ENCODE measurements at regions of chr2 and their contacts with region 1.

Region 1: DNA sequence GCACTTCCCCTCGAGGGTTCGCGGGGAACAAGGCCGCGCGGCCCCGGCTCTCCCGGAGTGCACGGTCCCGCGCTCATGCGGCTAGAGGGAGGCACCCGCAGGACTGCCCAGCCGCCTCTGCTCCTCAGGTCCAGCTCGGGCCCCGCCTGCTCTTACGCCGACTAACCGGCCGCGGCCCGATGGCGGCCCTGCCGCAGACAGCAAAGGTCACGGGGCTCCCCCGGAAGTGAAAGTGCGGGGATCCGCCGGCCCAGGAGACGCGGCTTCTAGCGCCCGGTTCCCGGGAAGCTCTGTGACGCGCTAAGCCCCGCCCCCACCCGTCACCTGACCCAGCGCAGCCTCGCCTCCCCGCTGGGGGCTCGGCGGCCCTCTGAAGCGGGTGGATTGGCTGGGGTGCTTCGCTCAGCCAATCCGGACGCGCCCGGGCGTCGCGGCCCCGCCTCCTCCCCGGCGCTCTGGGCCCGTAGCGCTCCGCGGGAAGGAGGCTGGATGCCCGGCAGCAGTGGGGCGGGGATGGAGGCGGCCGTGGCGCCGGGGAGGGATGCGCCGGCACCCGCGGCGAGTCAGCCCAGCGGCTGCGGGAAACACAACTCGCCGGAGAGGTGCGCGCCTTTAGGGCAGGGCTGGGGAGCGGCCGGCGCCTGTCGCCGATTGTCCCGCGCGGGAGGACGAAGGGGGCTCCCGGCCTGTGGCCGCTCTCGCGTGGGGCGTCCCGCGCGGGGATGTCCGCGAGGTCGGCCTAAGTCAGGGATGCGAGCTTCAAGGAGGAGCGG is at the start of gene SCLY:
- DNase-seq: peak; percentile 98
- ATAC-seq: peak; percentile 99
- total RNA-seq, gene SCLY: 10.8 TPM

Region 2: DNA sequence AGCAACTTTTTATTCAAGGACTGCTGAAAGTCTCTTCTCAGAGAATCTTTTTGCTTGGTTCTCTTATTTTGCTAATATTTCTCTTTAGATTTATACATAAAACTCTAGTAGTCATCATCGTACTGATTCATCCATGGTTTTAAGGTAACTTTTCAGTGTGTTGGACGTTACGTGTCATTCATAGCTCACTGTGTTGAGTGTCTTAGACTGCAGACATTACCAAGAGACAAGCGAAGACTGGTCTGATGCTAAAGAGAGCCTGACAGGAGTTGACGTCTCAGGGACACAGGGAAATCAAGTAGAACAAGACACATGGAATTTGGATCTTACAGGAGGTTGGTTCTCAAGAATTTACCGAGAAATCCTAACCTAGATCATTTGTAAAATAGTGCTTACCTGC is 236.6 kb before region 1 on chr2:
- intact Hi-C with region 1: no loop called
- DNase-seq: no peak
- ATAC-seq: no peak

Region 3: DNA sequence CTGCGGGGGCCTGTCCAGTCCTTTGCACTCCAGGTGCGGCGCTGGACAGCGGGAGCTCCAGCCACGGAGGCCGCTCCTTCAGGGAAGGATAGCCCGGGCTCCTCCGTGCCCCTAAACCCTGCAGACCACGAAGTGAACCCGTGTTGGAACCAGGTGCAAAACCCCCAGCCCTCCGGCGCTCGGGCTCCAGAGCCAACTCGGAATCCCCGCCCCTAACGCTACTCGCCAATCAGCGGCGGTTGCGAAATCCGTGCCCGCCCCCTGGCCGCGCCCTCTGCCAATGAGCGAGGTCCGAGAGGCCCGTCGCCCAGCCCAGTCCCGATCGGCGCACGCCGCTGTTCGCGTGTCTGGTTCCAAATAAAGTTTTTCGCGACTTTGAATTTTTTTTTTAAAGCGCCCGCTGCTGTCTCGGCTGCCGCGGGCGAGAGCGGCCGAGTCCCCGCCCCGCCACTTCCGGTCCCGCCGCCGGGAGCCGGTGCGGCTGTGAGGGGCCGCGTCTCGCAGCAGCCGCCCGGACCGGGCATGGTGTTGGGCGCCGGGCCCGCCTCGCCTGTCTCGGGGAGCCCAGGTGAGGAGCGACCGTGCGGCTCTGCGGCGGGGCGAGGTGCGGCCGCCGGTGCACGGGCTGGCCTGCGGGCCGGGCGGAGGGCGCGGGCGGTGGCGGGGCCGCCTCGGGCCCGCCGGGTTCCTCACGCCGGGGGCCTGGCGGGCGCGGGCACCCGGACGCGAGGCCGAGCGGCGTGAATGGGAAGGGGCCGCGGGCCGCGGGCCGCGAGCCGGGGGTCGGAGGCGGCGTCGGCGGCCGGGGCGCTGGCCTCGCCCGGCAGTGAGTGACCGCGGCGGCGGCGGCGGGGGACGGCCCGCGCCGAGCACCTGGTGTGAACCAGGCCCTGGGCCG is 93.9 kb before region 1 on chr2 and contains the start of gene UBE2F:
- intact Hi-C with region 1: loop called (anchors 2 kb)
- DNase-seq: peak; percentile 99
- ATAC-seq: peak; percentile 98
- total RNA-seq, gene UBE2F: 73.3 TPM

Region 4: DNA sequence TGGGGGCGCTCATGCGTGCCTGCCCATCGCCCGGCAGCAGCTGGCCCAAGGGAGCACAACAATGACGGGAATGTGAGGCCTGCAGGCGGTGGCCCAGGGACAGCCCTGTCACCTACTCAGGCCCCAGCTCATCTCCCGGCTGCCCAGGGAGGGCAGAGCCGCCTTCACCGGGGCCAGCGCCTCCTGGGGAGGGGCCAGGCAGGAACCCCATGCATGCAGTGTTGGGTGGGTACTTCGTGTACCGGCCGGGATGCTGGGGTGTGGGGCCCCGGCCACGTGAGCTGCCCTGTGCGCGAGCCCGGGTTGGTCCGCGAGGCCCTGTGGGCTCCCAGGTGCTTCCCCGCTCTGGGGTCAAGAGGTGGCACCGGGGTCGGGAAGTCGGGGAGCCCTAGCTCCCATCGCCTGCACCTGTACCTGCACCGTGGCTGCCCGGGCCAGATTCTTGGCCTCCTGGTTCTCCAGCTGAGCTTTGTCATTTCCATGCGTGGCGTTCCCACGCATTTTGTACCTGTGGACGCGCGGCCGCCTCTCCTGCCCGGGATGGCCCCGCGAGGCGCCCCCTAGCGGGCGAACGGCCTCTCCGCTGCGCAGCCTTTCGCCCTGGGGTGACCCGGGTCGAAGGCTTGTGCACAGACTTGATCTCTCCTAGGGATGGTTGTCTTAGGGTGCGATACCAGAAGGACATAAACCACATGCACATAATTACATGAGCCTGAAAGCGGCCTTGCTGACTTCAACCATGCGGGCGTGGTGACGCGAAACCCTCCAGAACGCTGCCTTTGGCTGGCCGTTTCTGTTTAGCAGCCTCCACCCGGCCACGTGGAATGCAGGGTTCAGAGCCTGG is 78.7 kb after region 1 on chr2:
- intact Hi-C with region 1: loop called (anchors 1 kb)
- DNase-seq: peak; percentile 53
- ATAC-seq: peak; percentile 63

Region 5: DNA sequence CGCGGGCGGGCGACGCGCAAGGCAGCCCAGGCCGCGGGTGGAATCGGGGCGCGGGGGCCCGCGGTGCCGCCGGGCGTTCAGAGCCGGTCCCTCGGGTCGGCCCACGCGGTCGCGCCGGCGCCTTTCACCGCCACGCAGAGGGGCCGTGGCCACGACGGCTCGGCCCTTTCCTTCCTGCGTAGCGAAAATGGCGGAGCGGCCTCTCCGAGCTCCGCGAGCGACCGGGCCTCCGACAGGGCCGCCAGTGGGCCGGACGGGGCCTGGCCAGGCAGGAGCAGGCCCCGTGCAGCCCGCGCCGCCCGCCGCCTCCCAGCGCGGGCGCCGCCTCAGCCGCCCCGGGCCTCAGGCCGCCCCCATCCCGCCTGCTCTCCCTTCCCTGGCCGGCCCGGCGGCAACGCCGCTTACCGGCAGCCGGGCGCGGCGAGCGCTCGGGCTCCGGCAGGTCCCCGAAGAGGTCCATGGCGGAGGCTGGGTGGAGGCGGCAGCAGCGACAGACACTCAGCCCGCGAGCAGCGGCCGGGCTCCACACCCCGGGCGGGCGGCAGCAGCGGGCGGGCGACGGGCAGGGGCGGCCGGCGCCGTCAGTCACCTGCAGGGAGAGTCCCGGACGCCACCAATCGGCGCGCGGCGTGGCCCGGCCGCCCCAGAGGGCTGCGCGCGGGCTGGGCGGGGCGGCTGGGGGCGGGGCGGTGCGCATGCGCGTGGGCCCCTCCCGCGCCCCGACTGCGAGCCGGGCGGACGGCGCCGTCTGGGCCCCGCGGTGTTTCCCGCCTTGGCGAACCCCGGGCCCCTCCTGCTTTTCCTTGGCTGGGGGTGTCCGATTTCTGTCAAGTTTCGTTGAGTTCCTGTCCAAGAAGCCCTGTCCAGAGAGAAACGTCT is 142.6 kb after region 1 on chr2 and contains the start of gene ILKAP:
- intact Hi-C with region 1: loop called (anchors 2 kb)
- DNase-seq: peak; percentile 96
- ATAC-seq: peak; percentile 100
- total RNA-seq, gene ILKAP: 26.2 TPM